Pancreas (tissue), 10 donors: ENCODE measurements at regions of chr5 and their contacts with region 1.

Region 1: GRCh38 chr5:149636851-149637246 is 55.6 kb downstream of the ARHGEF37 start:
- DNase-seq: peak; percentile 49 to 89 (median 68)
- ATAC-seq: peak; percentile 82 to 88 (median 84)
- H3K4me3 ChIP-seq: no peak overlapping the region
- H3K27ac ChIP-seq: no peak overlapping the region
- H3K4me1 ChIP-seq: no peaks in the 10 kb centered on the region
- H3K27me3 ChIP-seq: no peaks in the 10 kb centered on the region
- CTCF ChIP-seq: peak; percentile 20 to 71 (median 64)

Region 2: GRCh38 chr5:149317281-149318048 is 319.4 kb before region 1 on chr5:
- intact Hi-C with region 1: no loop called
- DNase-seq: peak in 1 of 6 donors; percentile 28
- ATAC-seq: peak in 3 of 4 donors; percentile 50 to 61 (median 58)
- H3K4me3 ChIP-seq: no peak overlapping the region
- H3K27ac ChIP-seq: no peak overlapping the region
- H3K4me1 ChIP-seq: peaks cover 7 to 10% (median 9%) of the 10 kb centered on the region in 3 donors
- H3K27me3 ChIP-seq: no peaks in the 10 kb centered on the region
- CTCF ChIP-seq: peak; percentile 14 to 48 (median 42)

Region 3: GRCh38 chr5:149775785-149776184 is 138.9 kb after region 1 on chr5:
- intact Hi-C with region 1: no loop called
- DNase-seq: no peak
- ATAC-seq: no peak
- H3K4me3 ChIP-seq: no peak overlapping the region
- H3K27ac ChIP-seq: no peak overlapping the region
- H3K4me1 ChIP-seq: peaks cover 7 to 9% (median 7%) of the 10 kb centered on the region in 3 donors
- H3K27me3 ChIP-seq: no peaks in the 10 kb centered on the region
- CTCF ChIP-seq: no peak

Region 4: GRCh38 chr5:149828161-149828884 is 191.5 kb after region 1 on chr5:
- intact Hi-C with region 1: loop called (anchors 2 to 5 kb)
- DNase-seq: peak in 5 of 6 donors; percentile 63 to 94 (median 81)
- ATAC-seq: peak; percentile 82 to 95 (median 94)
- H3K4me3 ChIP-seq: no peak overlapping the region
- H3K27ac ChIP-seq: no peak overlapping the region
- H3K4me1 ChIP-seq: no peaks in the 10 kb centered on the region
- H3K27me3 ChIP-seq: no peaks in the 10 kb centered on the region
- CTCF ChIP-seq: peak; percentile 67 to 90 (median 84)